ENCODE measurements at regions of chr3 and their contacts with region 1.

Region 1: GRCh38 chr3:112333002-112333380 is at the start of gene CD200:
- DNase-seq: peak; percentile 50
- ATAC-seq: peak; percentile 89
- H3K4me3 Mint-ChIP-seq: peak within 1 kb of the TSS; percentile 75
- H3K27ac Mint-ChIP-seq: no peak within 1 kb of the TSS
- H3K4me1 Mint-ChIP-seq: peaks cover 17% of the 10 kb centered on the region
- H3K27me3 Mint-ChIP-seq: peaks cover 13% of the 10 kb centered on the region
- total RNA-seq, gene CD200: 0.67 to 3.6 TPM

Region 2: GRCh38 chr3:112074721-112075497 is 258.1 kb before region 1 on chr3:
- CTCF ChIA-PET with region 1: no interaction called
- DNase-seq: peak; percentile 56
- ATAC-seq: peak; percentile 89
- H3K4me3 Mint-ChIP-seq: no peak overlapping the region
- H3K27ac Mint-ChIP-seq: peak overlapping the region; percentile 72
- H3K4me1 Mint-ChIP-seq: peaks cover 25% of the 10 kb centered on the region
- H3K27me3 Mint-ChIP-seq: peaks cover 3% of the 10 kb centered on the region

Region 3: DNA sequence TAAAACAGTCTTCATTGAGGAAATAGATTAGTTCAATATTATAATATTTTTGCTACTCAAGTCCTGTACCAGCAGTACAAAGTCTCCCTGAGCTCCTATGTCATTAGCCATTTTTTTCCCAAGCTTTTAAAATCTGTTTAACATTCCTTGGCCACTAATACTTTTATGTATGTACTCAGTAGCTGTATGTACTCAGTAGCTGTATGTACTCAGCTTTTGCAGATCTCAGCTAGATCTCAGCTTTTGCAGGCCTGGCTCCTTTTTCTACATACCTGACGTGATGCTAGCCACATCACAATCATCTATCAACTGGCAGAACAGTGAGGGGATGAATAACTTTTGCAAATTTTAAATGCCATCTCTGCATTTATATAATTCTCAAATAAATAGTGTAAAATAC is 52.7 kb before region 1 on chr3:
- CTCF ChIA-PET with region 1: no interaction called
- DNase-seq: no peak
- ATAC-seq: no peak
- H3K4me3 Mint-ChIP-seq: no peak overlapping the region
- H3K27ac Mint-ChIP-seq: no peak overlapping the region
- H3K4me1 Mint-ChIP-seq: no peaks in the 10 kb centered on the region
- H3K27me3 Mint-ChIP-seq: peaks cover 27% of the 10 kb centered on the region

Region 4: GRCh38 chr3:112308151-112308911 is 24.7 kb before region 1 on chr3:
- CTCF ChIA-PET with region 1: no interaction called
- DNase-seq: no peak
- ATAC-seq: no peak
- H3K4me3 Mint-ChIP-seq: no peak overlapping the region
- H3K27ac Mint-ChIP-seq: no peak overlapping the region
- H3K4me1 Mint-ChIP-seq: no peaks in the 10 kb centered on the region
- H3K27me3 Mint-ChIP-seq: no peaks in the 10 kb centered on the region

Region 5: DNA sequence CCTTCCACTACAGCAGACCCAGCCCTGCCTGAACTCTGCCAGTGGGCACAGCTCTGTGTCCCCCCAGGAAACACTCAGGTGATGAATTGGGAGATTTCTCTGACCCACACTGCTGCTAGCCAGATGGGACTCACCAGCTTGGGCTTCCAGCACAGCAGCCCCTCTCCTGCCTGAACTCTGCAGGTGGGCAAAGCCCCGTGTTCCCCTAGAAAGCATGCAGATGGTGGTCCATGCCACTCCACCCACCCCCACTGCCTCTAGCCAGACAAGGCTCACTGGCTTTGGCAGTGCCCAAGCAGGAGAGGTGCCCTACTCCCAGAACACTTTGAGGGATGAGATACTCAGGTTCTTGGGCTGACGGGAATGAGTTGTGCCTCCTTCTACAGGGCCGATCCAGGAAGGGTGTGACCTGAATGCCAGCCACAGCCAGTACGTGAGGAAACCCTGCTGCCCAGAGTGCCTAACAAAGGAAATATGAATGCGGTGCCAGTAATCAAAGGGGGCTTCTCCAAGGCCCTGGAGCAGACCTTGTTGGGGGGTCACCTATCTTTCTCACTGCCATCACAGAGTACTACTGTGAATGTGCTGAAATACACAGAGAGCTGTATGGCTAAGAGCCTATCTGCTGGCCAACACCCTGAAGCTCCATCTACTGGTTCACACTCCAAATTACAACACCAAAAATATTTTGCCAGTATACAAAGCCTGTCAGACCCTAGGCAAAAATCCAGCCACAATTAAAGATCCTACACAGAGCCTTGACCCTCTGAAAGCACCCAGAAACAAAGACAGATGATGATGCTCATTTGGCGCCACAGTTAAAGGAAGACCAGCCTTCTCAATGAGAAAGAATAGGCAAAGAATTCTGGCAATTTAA is 104.4 kb after region 1 on chr3:
- CTCF ChIA-PET with region 1: interaction called, 18 read pairs
- DNase-seq: peak; percentile 41
- ATAC-seq: peak; percentile 92
- H3K4me3 Mint-ChIP-seq: no peak overlapping the region
- H3K27ac Mint-ChIP-seq: peak overlapping the region; percentile 41
- H3K4me1 Mint-ChIP-seq: peaks cover 17% of the 10 kb centered on the region
- H3K27me3 Mint-ChIP-seq: no peaks in the 10 kb centered on the region